ENCODE measurements at regions of chr5 and their contacts with region 1.

Region 1: GRCh38 chr5:179795863-179796833 is 2.4 kb downstream of the LTC4S start:
- DNase-seq: peak; percentile 74 to 88 (median 82)
- H3K4me3 ChIP-seq: peak overlapping the region; percentile 49
- H3K27ac ChIP-seq: peak overlapping the region; percentile 63 to 68
- H3K4me1 ChIP-seq: peaks cover 15% of the 10 kb centered on the region
- H3K27me3 ChIP-seq: no peaks in the 10 kb centered on the region
- CTCF ChIP-seq: peak; percentile 55 to 87 (median 85)
- EP300 ChIP-seq: no peak
- POLR2A ChIP-seq: no peak

Region 2: GRCh38 chr5:179763215-179763945 is 32.8 kb before region 1 on chr5:
- intact Hi-C with region 1: loop called in 3 of 4 experiments (anchors 5 kb)
- DNase-seq: peak; percentile 55 to 81 (median 68)
- H3K4me3 ChIP-seq: no peak overlapping the region
- H3K27ac ChIP-seq: no peak overlapping the region
- H3K4me1 ChIP-seq: peaks cover 2% of the 10 kb centered on the region
- H3K27me3 ChIP-seq: no peaks in the 10 kb centered on the region
- CTCF ChIP-seq: peak; percentile 58 to 88 (median 87)
- EP300 ChIP-seq: no peak
- POLR2A ChIP-seq: no peak

Region 3: GRCh38 chr5:179858586-179859427 is 62.7 kb after region 1 on chr5 and contains the start of gene MRNIP:
- intact Hi-C with region 1: loop called in 1 of 4 experiments (anchors 10 kb)
- DNase-seq: peak; percentile 95 to 98 (median 96)
- H3K4me3 ChIP-seq: peak within 1 kb of the TSS; percentile 79
- H3K27ac ChIP-seq: peak within 1 kb of the TSS; percentile 71 to 86
- H3K4me1 ChIP-seq: peaks cover 2% of the 10 kb centered on the region
- H3K27me3 ChIP-seq: no peaks in the 10 kb centered on the region
- CTCF ChIP-seq: peak in 2 of 3 donors; percentile 13 to 54
- EP300 ChIP-seq: no peak
- POLR2A ChIP-seq: peak; percentile 55
- total RNA-seq, gene MRNIP: 46.2 to 61.1 (median 50.3) TPM

Region 4: DNA sequence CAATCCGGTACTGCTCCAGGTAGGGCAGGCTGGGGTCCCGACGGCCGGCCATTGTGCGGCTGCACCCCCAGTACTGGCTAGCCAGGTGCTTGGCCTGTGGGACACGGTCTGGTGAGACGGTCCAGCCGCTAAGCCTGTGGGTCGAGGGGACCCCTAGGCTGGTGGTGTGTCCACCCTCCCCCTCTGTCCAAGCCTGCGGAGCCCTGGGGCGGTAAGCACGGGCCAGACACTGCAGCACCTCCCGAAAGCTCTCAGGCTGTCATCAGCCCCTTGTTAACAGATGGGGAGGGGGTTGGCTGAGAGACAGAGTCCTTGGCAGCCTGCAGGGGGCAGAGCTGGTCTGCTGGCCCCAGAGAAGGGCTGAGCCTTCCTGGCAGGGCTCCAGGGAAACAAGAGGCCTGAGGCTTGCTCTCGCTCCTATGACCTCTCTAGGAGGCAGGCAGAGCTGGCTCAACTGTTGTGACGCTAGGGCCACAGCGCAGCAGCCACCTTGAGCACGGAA is 74.3 kb after region 1 on chr5:
- intact Hi-C with region 1: no loop called
- DNase-seq: peak; percentile 63 to 83 (median 74)
- H3K4me3 ChIP-seq: no peak overlapping the region
- H3K27ac ChIP-seq: no peak overlapping the region
- H3K4me1 ChIP-seq: no peaks in the 10 kb centered on the region
- H3K27me3 ChIP-seq: no peaks in the 10 kb centered on the region
- CTCF ChIP-seq: peak in 1 of 3 donors; percentile 17
- EP300 ChIP-seq: no peak
- POLR2A ChIP-seq: no peak